ENCODE measurements at regions of chr4 and their contacts with region 1.

Region 1: DNA sequence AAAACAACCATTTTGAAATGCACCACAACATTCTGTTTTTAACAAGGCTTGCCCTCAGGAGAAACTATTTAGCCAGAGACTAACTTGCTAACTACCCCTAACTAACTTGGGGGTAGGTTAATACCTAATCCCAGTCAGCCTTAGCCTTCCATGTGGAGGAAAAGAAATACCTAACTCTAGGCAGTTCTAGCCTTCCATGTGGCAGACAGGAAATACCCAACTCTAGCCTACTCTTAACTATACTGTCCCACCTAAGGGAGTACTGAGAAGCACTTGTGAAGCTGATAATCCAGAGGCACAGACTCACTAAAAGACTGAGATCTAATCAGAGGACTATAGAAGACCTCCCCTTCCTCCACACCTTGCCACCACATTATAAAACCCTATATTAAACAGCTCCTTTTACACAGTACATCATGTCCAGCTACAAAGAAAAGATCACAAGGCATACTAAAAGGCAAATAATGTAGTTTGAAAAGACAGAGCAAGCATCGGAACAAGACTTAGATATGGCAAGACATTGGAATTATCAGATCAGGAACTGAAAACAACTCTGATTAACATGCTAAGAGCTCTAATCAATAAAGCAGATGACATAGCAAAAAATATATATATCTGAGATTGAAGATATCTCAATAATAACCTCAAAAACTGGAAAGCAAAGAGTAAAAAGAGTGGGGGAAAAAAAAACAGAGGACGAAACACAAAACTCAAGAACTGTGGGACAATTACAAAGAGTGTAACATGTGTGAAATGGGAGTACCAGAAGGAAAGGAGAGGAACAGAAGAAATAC is 52.2 kb downstream of the FRYL start:
- DNase-seq: no peak
- H3K4me3 ChIP-seq: no peak overlapping the region
- H3K27ac ChIP-seq: no peak overlapping the region
- H3K4me1 ChIP-seq: peaks cover 10% of the 10 kb centered on the region
- H3K27me3 ChIP-seq: no peaks in the 10 kb centered on the region
- CTCF ChIP-seq: no peak
- EP300 ChIP-seq: no peak
- POLR2A ChIP-seq: no peak

Region 2: GRCh38 chr4:48801734-48802133 is 73.9 kb after region 1 on chr4:
- intact Hi-C with region 1: loop called in 1 of 4 experiments (anchors 2 kb)
- DNase-seq: no peak
- H3K4me3 ChIP-seq: no peak overlapping the region
- H3K27ac ChIP-seq: no peak overlapping the region
- H3K4me1 ChIP-seq: no peaks in the 10 kb centered on the region
- H3K27me3 ChIP-seq: no peaks in the 10 kb centered on the region
- CTCF ChIP-seq: no peak
- EP300 ChIP-seq: no peak
- POLR2A ChIP-seq: no peak